ENCODE measurements at regions of chr6 and their contacts with region 1.

Region 1: DNA sequence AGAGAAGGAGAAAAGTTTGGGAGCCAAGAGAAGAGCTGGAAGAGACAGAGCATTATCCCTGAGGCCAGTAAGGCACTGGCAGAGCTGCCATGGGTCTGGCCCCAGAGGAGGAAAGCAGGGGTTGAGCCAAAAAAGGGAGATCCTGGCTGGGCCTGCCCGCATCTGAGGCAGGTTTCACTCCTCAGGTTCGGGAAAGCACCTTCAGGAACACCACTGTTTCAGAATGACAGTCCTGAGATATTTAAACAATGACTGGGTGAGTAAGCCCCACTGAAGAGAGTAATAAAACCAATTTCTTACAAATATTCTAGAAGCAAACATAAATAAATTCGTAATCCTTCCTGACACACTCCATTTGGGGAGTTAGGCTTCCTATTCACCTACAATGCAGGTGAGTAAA is 152.2 kb downstream of the BACH2 start:
- DNase-seq: no peak
- H3K4me3 Mint-ChIP-seq: peak overlapping the region; percentile 54
- H3K27ac Mint-ChIP-seq: peak overlapping the region; percentile 92
- H3K4me1 Mint-ChIP-seq: peaks cover 68% of the 10 kb centered on the region
- H3K27me3 Mint-ChIP-seq: no peaks in the 10 kb centered on the region

Region 2: DNA sequence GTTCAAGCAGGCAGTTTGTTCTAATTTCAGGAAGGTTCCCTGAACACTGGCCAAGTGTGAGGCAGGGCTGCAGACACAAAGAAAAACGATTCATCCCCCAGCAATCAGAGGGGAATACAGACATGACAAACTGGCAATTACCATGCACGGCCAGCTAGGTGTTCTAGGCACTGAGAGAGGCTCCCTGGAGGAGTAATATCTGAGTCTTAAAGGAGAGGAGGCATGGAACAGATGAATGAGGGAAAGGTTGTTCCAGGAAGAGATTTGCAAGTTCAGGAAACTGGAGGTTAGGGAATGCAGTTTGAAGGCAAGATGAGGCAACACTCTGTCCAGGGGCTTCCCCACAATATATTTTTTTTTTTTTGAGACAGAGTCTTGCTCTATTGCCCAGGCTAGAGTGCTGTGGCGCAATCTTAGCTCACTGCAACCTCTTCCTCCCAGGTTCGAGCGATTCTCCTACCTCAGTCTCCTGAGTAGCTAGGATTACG is 743.4 kb before region 1 on chr6:
- intact Hi-C with region 1: no loop called
- DNase-seq: no peak
- H3K4me3 Mint-ChIP-seq: no peak overlapping the region
- H3K27ac Mint-ChIP-seq: no peak overlapping the region
- H3K4me1 Mint-ChIP-seq: peaks cover 3% of the 10 kb centered on the region
- H3K27me3 Mint-ChIP-seq: no peaks in the 10 kb centered on the region

Region 3: DNA sequence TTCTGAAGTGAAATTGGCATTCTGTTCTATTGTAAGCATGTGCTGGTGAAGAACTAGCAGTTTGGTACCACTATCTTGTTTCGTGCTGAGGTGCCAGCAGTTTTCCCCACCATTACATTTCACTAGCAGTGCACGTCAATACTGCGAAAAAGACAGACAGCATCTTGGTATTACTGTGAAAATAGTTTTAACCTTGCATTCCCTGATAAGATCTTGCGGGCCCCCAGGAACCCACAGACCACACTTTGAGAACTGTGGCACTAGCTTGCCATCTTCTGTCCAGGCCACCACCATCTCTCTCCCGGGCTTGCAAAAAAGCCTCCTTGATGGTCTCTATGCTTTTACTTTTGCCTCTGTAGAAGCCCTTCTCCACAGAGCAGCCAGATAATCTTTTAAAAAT is 33.4 kb before region 1 on chr6:
- intact Hi-C with region 1: loop called (anchors 1 kb)
- DNase-seq: peak; percentile 76
- H3K4me3 Mint-ChIP-seq: peak overlapping the region; percentile 0
- H3K27ac Mint-ChIP-seq: peak overlapping the region; percentile 68
- H3K4me1 Mint-ChIP-seq: peaks cover 69% of the 10 kb centered on the region
- H3K27me3 Mint-ChIP-seq: no peaks in the 10 kb centered on the region

Region 4: GRCh38 chr6:90123831-90124230 is 20.6 kb before region 1 on chr6:
- intact Hi-C with region 1: loop called (anchors 1 kb)
- DNase-seq: no peak
- H3K4me3 Mint-ChIP-seq: no peak overlapping the region
- H3K27ac Mint-ChIP-seq: peak overlapping the region; percentile 53
- H3K4me1 Mint-ChIP-seq: peaks cover 55% of the 10 kb centered on the region
- H3K27me3 Mint-ChIP-seq: no peaks in the 10 kb centered on the region

Region 5: GRCh38 chr6:90194371-90194841 is 50.0 kb after region 1 on chr6:
- intact Hi-C with region 1: loop called (anchors 1 kb)
- DNase-seq: no peak
- H3K4me3 Mint-ChIP-seq: no peak overlapping the region
- H3K27ac Mint-ChIP-seq: peak overlapping the region; percentile 43
- H3K4me1 Mint-ChIP-seq: peaks cover 63% of the 10 kb centered on the region
- H3K27me3 Mint-ChIP-seq: no peaks in the 10 kb centered on the region

Region 6: GRCh38 chr6:90238496-90239266 is 94.3 kb after region 1 on chr6:
- intact Hi-C with region 1: loop called (anchors 1 kb)
- DNase-seq: no peak
- H3K4me3 Mint-ChIP-seq: no peak overlapping the region
- H3K27ac Mint-ChIP-seq: peak overlapping the region; percentile 70
- H3K4me1 Mint-ChIP-seq: peaks cover 68% of the 10 kb centered on the region
- H3K27me3 Mint-ChIP-seq: no peaks in the 10 kb centered on the region

Region 7: GRCh38 chr6:90251295-90251992 is 107.0 kb after region 1 on chr6:
- intact Hi-C with region 1: loop called (anchors 1 kb)
- DNase-seq: no peak
- H3K4me3 Mint-ChIP-seq: peak overlapping the region; percentile 48
- H3K27ac Mint-ChIP-seq: peak overlapping the region; percentile 83
- H3K4me1 Mint-ChIP-seq: peaks cover 71% of the 10 kb centered on the region
- H3K27me3 Mint-ChIP-seq: no peaks in the 10 kb centered on the region